ENCODE measurements at regions of chr13 and their contacts with region 1.

Region 1: DNA sequence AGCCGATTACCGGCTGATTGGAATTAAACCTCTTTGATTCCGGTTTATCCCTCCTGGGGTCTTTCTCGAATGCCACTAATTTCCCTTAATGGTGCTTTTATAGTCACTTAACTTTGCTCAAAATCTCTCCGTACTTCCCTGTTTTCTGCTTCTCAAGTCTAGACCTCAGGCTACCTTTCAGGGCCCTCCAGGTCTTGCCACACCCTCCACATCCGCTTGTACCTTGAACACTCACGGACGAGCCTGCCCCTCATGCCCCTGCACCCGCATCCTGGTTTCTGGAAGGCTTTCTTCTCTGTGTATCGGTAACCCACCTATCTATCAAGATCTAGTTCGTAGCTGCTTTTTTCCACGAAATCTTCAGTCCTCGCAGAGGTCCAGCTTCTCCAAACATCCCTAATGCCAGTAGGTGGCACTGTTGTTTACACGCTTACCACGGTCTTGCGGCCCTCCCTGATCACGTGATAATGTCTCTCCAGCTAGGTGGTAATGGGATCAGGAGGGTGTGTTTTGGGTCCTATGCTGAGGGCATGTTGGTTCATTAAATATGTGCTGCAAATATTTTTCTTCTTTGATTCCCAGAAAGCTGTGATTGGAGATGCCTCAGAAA is 13.8 kb downstream of the ATP12A start:
- DNase-seq: peak; percentile 53
- ATAC-seq: peak; percentile 94
- H3K4me3 Mint-ChIP-seq: peak overlapping the region; percentile 45
- H3K27ac Mint-ChIP-seq: no peak overlapping the region
- H3K4me1 Mint-ChIP-seq: peaks cover 7% of the 10 kb centered on the region
- H3K27me3 Mint-ChIP-seq: peaks cover 4% of the 10 kb centered on the region; the same call in 1 of the 2 replicates
- CTCF ChIP-seq: peak; percentile 53

Region 2: GRCh38 chr13:24671386-24672107 is 22.4 kb before region 1 on chr13:
- CTCF ChIA-PET with region 1: interaction called, 11 read pairs
- POLR2A ChIA-PET with region 1: no interaction called
- DNase-seq: peak; percentile 35
- ATAC-seq: peak; percentile 84
- H3K4me3 Mint-ChIP-seq: peak overlapping the region; percentile 58
- H3K27ac Mint-ChIP-seq: no peak overlapping the region
- H3K4me1 Mint-ChIP-seq: peaks cover 15% of the 10 kb centered on the region
- H3K27me3 Mint-ChIP-seq: no peaks in the 10 kb centered on the region; the same call in 1 of the 2 replicates
- CTCF ChIP-seq: no peak; the same call in 1 of the 2 replicates

Region 3: GRCh38 chr13:24709186-24709913 is 15.4 kb after region 1 on chr13:
- CTCF ChIA-PET with region 1: interaction called, 23 read pairs
- POLR2A ChIA-PET with region 1: no interaction called
- DNase-seq: no peak
- ATAC-seq: peak; percentile 75
- H3K4me3 Mint-ChIP-seq: no peak overlapping the region
- H3K27ac Mint-ChIP-seq: no peak overlapping the region
- H3K4me1 Mint-ChIP-seq: peaks cover 7% of the 10 kb centered on the region
- H3K27me3 Mint-ChIP-seq: no peaks in the 10 kb centered on the region
- CTCF ChIP-seq: no peak

Region 4: GRCh38 chr13:24716011-24716410 is 22.0 kb after region 1 on chr13:
- CTCF ChIA-PET with region 1: interaction called, 29 read pairs
- POLR2A ChIA-PET with region 1: no interaction called
- DNase-seq: no peak
- ATAC-seq: peak; percentile 95
- H3K4me3 Mint-ChIP-seq: peak overlapping the region; percentile 56
- H3K27ac Mint-ChIP-seq: peak overlapping the region; percentile 95
- H3K4me1 Mint-ChIP-seq: peaks cover 26% of the 10 kb centered on the region
- H3K27me3 Mint-ChIP-seq: no peaks in the 10 kb centered on the region; the same call in 1 of the 2 replicates
- CTCF ChIP-seq: no peak

Region 5: GRCh38 chr13:24727731-24728601 is 34.0 kb after region 1 on chr13:
- CTCF ChIA-PET with region 1: interaction called, 61 read pairs
- POLR2A ChIA-PET with region 1: interaction called, 4 read pairs
- DNase-seq: peak; percentile 64
- ATAC-seq: peak; percentile 98
- H3K4me3 Mint-ChIP-seq: no peak overlapping the region
- H3K27ac Mint-ChIP-seq: no peak overlapping the region
- H3K4me1 Mint-ChIP-seq: no peaks in the 10 kb centered on the region
- H3K27me3 Mint-ChIP-seq: no peaks in the 10 kb centered on the region; the same call in 1 of the 2 replicates
- CTCF ChIP-seq: peak; percentile 42; the same call in 1 of the 2 replicates

Region 6: GRCh38 chr13:24741016-24741662 is 47.2 kb after region 1 on chr13:
- CTCF ChIA-PET with region 1: interaction called, 14 read pairs
- POLR2A ChIA-PET with region 1: no interaction called
- DNase-seq: no peak
- ATAC-seq: peak; percentile 29
- H3K4me3 Mint-ChIP-seq: no peak overlapping the region
- H3K27ac Mint-ChIP-seq: no peak overlapping the region
- H3K4me1 Mint-ChIP-seq: peaks cover 10% of the 10 kb centered on the region
- H3K27me3 Mint-ChIP-seq: peaks cover 36% of the 10 kb centered on the region
- CTCF ChIP-seq: no peak

Region 7: GRCh38 chr13:24882665-24883064 is 188.7 kb after region 1 on chr13:
- CTCF ChIA-PET with region 1: no interaction called
- POLR2A ChIA-PET with region 1: no interaction called
- DNase-seq: no peak
- ATAC-seq: no peak
- H3K4me3 Mint-ChIP-seq: no peak overlapping the region
- H3K27ac Mint-ChIP-seq: no peak overlapping the region
- H3K4me1 Mint-ChIP-seq: peaks cover 13% of the 10 kb centered on the region
- H3K27me3 Mint-ChIP-seq: no peaks in the 10 kb centered on the region
- CTCF ChIP-seq: no peak

Region 8: DNA sequence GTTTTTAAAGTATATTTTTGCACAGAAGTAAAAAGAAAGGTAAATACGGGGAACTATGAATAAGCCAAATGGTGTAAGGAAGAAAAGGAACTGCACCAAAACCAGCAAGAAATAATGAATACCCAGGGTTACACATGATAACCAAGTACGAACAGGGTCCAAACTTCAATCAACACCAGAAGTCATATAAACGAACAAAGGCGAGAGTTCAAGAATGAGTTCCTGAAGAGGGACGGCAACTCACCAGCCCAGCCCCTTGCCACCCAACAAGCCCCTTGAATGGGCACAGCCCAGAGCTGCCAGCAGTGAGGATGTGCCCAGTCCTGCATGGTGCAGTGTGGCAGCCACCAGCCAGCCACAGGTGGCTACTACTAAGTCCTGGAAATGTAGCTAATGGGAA is 202.1 kb after region 1 on chr13:
- CTCF ChIA-PET with region 1: no interaction called
- POLR2A ChIA-PET with region 1: no interaction called
- DNase-seq: no peak
- ATAC-seq: no peak
- H3K4me3 Mint-ChIP-seq: no peak overlapping the region
- H3K27ac Mint-ChIP-seq: no peak overlapping the region
- H3K4me1 Mint-ChIP-seq: peaks cover 3% of the 10 kb centered on the region; the same call in 1 of the 2 replicates
- H3K27me3 Mint-ChIP-seq: no peaks in the 10 kb centered on the region
- CTCF ChIP-seq: no peak

Region 9: GRCh38 chr13:24985109-24985508 is 291.1 kb after region 1 on chr13:
- CTCF ChIA-PET with region 1: interaction called, 18 read pairs
- POLR2A ChIA-PET with region 1: no interaction called
- DNase-seq: peak; percentile 36
- ATAC-seq: peak; percentile 82
- H3K4me3 Mint-ChIP-seq: no peak overlapping the region
- H3K27ac Mint-ChIP-seq: no peak overlapping the region
- H3K4me1 Mint-ChIP-seq: peaks cover 35% of the 10 kb centered on the region
- H3K27me3 Mint-ChIP-seq: peaks cover 11% of the 10 kb centered on the region
- CTCF ChIP-seq: no peak